AG04450 (cell line): ENCODE measurements at regions of chr17 and their contacts with region 1.

Region 1: DNA sequence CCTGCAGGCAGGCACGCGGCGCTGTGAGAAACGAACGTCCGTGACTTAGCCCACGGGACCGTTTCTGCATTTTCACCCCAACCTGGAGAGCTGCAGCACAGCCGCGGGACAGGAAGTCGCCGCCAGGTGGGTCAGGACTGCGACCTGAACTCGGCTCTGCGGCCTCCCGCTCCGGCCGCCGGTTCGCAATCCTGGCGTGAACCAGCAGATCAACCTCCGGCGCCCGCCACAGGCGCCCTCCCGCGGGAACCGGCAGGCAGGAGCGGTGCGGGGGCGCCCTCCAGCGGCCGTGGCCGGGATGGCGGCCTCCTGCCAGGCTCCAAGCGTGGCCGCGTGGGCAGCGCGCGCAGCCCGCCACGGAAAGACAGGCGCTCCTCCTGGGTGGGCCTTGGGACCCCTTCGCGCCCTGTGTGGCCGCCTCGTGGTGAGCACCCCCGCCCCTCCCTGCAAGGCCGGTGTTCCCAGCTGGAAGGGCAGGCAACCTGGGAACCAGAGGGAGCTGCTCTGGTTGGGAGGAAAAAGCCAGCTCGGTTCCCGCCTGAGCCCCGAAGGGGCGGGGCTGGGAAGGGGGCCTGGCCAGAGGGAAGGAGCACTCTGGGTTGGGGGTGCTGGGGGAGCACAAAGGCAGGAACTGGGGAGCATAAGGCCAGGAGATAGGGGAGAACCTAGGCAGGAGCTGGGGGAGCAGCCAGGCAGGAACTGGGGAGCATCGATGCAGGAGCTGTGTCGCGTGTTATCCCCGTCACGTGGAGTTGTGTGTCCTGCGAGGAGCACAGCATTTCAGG is 28.2 kb downstream of the ACTG1 start:
- DNase-seq: no peak
- H3K4me3 ChIP-seq: peak overlapping the region; percentile 56
- H3K27ac ChIP-seq: no peak overlapping the region
- H3K27me3 ChIP-seq: peaks cover 6% of the 10 kb centered on the region
- CTCF ChIP-seq: peak; percentile 69

Region 2: GRCh38 chr17:81253358-81254131 is 230.8 kb before region 1 on chr17:
- CTCF ChIA-PET with region 1: interaction called, 21 read pairs
- POLR2A ChIA-PET with region 1: interaction called, 7 read pairs
- DNase-seq: no peak
- H3K4me3 ChIP-seq: no peak overlapping the region
- H3K27ac ChIP-seq: no peak overlapping the region
- H3K27me3 ChIP-seq: no peaks in the 10 kb centered on the region
- CTCF ChIP-seq: peak; percentile 77

Region 3: DNA sequence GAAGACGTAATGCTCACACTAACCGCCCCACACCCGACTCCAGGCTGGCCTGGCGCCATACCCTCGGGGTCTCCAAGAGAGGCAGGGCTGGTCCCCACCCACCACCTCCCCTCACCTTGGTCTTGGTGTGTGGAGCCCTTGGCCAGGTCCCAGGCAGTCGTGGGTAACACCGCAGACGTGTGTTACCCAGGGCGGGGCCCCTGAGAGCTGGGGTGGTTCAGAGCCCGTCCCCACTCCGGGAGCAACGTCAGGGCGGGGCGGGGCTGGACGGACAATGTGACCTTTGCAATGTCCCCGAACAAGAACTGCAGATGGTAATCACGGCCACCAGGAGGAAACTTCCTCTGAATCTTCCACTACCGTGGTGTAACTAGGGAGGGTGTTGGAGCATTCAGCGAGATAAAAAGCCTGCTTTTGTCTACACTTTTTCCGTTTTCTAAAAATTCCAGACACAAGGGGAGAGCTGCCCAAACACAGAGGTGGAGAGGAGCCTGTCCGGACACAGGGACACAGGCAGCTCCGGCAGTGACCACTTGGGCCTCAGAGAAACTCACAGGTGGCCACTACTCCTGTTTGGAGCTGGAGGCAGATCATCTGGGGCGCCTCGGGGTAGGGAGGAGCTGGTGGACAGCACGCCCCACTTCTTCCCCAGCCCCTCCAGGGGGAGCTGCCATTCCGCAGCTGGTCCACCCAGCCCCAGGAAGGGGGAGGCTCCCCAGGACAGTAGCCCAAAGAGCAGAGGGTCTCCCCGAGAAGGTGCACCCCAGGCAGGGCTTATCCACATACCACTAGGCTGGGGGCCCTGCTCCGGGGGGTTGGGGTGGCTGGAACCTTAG is 175.1 kb before region 1 on chr17:
- CTCF ChIA-PET with region 1: interaction called, 12 read pairs
- POLR2A ChIA-PET with region 1: interaction called, 3 read pairs
- DNase-seq: no peak
- H3K4me3 ChIP-seq: no peak overlapping the region
- H3K27ac ChIP-seq: no peak overlapping the region
- H3K27me3 ChIP-seq: peaks cover 17% of the 10 kb centered on the region
- CTCF ChIP-seq: peak; percentile 54

Region 4: GRCh38 chr17:81401723-81402529 is 82.5 kb before region 1 on chr17:
- CTCF ChIA-PET with region 1: interaction called, 10 read pairs
- POLR2A ChIA-PET with region 1: interaction called, 11 read pairs
- DNase-seq: no peak
- H3K4me3 ChIP-seq: no peak overlapping the region
- H3K27ac ChIP-seq: no peak overlapping the region
- H3K27me3 ChIP-seq: no peaks in the 10 kb centered on the region
- CTCF ChIP-seq: peak; percentile 30; the same call in 1 of the 2 replicates